Naive thymus-derived CD4-positive, alpha-beta T cell (primary cell): ENCODE measurements at regions of chr12 and their contacts with region 1.

Region 1: DNA sequence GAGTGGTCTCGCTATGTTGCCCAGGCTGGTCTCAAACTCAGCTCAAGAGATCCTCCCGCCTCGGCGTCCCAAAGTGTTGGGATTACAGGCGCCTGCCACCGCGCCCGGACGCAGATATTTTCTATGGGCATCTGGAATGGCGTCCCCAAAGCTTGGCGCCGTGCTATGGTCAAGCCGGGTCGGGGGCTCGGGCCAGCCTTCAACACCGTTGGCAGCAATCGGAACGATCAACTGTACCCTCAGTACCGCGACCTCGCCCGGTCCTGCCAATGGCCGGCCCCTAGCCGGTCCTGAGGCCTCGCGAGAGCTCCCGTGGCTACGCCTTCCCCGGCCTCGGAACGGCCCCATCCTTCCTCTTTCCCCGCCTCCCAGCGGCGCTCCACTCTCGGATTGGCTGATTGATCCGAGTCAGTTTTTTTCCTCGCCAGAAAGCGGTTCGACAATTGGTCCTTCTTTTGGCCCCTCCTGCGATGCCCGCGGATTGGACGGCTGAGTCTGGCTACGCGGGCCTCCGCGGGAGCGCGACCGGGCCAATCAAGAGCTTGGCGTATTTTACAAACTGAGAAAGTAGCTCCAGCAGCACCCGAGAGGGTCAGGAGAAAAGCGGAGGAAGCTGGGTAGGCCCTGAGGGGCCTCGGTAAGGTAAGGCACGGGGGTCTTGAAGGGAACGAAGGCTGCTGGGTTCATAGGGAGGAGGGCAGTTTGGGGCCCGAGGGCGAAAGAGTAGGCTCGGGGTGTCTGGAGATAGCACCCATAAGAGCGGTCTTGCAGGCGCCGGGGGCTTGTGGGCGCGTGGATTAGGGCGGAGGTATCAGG is at the start of gene TROAP:
- DNase-seq: peak; percentile 89 to 98 (median 96)
- ATAC-seq: peak; percentile 97
- H3K4me3 ChIP-seq: peak within 1 kb of the TSS; percentile 75
- H3K4me3 Mint-ChIP-seq: peak within 1 kb of the TSS; percentile 86 to 98 (median 92)
- H3K27ac ChIP-seq: peak within 1 kb of the TSS; percentile 72
- H3K27ac Mint-ChIP-seq: peak within 1 kb of the TSS; percentile 29 to 95 (median 83)
- H3K4me1 ChIP-seq: peaks cover 5 to 14% of the 10 kb centered on the region in 2 donors
- H3K4me1 Mint-ChIP-seq: peaks cover 16 to 25% (median 19%) of the 10 kb centered on the region in 7 donors
- H3K27me3 ChIP-seq: no peaks in the 10 kb centered on the region
- H3K27me3 Mint-ChIP-seq: peaks cover 0 to 5% (median 0%) of the 10 kb centered on the region in 5 donors
- total RNA-seq, gene TROAP: 0.83 to 58.2 (median 1.3) TPM in 4 of 5 experiments, not detected in the other

Region 2: GRCh38 chr12:49264738-49265515 is 58.0 kb before region 1 on chr12 and contains the start of gene TUBA1C:
- CTCF ChIA-PET with region 1: no interaction called
- POLR2A ChIA-PET with region 1: no interaction called
- intact Hi-C with region 1: loop called (anchors 1 kb)
- DNase-seq: peak; percentile 67 to 98 (median 72)
- ATAC-seq: peak; percentile 93
- H3K4me3 ChIP-seq: peak within 1 kb of the TSS; percentile 91
- H3K4me3 Mint-ChIP-seq: peak within 1 kb of the TSS; percentile 88 to 99 (median 92)
- H3K27ac ChIP-seq: peak within 1 kb of the TSS; percentile 68
- H3K27ac Mint-ChIP-seq: peak within 1 kb of the TSS; percentile 65 to 99 (median 89)
- H3K4me1 ChIP-seq: peaks cover 16% of the 10 kb centered on the region in 2 donors
- H3K4me1 Mint-ChIP-seq: peaks cover 4 to 51% (median 11%) of the 10 kb centered on the region in 7 donors
- H3K27me3 ChIP-seq: no peaks in the 10 kb centered on the region
- H3K27me3 Mint-ChIP-seq: peaks cover 0 to 2% (median 0%) of the 10 kb centered on the region in 5 donors
- total RNA-seq, gene TUBA1C: 17.9 to 195 (median 24.1) TPM

Region 3: GRCh38 chr12:49336645-49337584 is 14.0 kb after region 1 on chr12 and contains the start of gene C1QL4:
- CTCF ChIA-PET with region 1: interaction called, 6 read pairs
- POLR2A ChIA-PET with region 1: interaction called, 5 read pairs
- intact Hi-C with region 1: loop called (anchors 1 kb)
- DNase-seq: peak; percentile 73 to 96 (median 85)
- ATAC-seq: peak; percentile 98
- H3K4me3 ChIP-seq: peak within 1 kb of the TSS; percentile 46
- H3K4me3 Mint-ChIP-seq: peak within 1 kb of the TSS; percentile 31 to 77 (median 72)
- H3K27ac ChIP-seq: no peak within 1 kb of the TSS
- H3K27ac Mint-ChIP-seq: peak within 1 kb of the TSS in 1 of 9 donors; percentile 32
- H3K4me1 ChIP-seq: peaks cover 8 to 9% of the 10 kb centered on the region in 2 donors
- H3K4me1 Mint-ChIP-seq: peaks cover 16 to 39% (median 31%) of the 10 kb centered on the region in 7 donors
- H3K27me3 ChIP-seq: peaks cover 0 to 21% of the 10 kb centered on the region in 2 donors
- H3K27me3 Mint-ChIP-seq: peaks cover 64 to 93% (median 75%) of the 10 kb centered on the region in 5 donors
- total RNA-seq, gene C1QL4: not detected

Region 4: DNA sequence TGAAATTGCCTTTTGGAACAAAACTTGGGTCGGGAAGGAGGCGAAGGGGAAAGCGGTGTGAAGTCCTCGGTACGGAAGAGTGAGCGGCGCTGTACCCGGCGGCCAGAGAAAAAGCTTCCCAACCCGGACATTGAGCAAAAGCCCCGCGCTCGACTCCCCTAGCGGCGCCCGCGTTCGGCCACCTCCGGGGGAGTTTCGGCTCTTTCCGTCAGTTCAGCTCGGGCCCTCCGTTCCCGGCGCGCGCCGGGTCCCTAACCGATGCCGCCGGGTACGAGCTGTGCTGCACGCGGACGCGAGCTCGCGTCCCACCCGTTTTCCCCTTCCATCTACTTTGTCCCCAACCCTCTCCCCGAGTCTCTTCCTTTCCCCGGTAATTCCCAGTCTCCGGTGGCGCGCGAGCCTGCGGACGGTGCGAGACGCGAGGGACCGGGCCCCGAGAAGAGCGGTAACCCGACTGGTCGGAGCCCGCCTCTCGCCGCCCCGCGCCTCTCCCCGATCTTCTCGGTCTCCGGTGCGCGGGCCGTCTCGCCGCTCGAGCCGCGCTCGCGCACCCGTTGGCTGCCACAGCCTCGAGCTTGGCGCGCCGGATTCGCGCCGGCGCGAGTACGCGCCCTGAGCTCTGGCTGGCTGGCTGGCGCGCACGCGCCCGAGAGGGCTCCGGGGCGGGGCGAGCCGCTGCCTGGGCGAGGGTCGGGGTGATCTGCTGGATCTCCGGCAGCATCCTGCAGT is 43.9 kb after region 1 on chr12:
- CTCF ChIA-PET with region 1: no interaction called
- POLR2A ChIA-PET with region 1: interaction called, 5 read pairs
- intact Hi-C with region 1: loop called (anchors 2 kb)
- DNase-seq: peak; percentile 72 to 95 (median 82)
- ATAC-seq: peak; percentile 90
- H3K4me3 ChIP-seq: peak overlapping the region; percentile 90
- H3K4me3 Mint-ChIP-seq: peak overlapping the region; percentile 71 to 97 (median 88)
- H3K27ac ChIP-seq: peak overlapping the region; percentile 87
- H3K27ac Mint-ChIP-seq: peak overlapping the region; percentile 65 to 97 (median 94)
- H3K4me1 ChIP-seq: peaks cover 0 to 15% of the 10 kb centered on the region in 2 donors
- H3K4me1 Mint-ChIP-seq: peaks cover 11 to 39% (median 31%) of the 10 kb centered on the region in 7 donors
- H3K27me3 ChIP-seq: no peaks in the 10 kb centered on the region
- H3K27me3 Mint-ChIP-seq: peaks cover 0 to 2% (median 0%) of the 10 kb centered on the region in 5 donors

Region 5: GRCh38 chr12:49388682-49389386 is 65.9 kb after region 1 on chr12:
- CTCF ChIA-PET with region 1: no interaction called
- POLR2A ChIA-PET with region 1: no interaction called
- intact Hi-C with region 1: no loop called
- DNase-seq: peak; percentile 29 to 66 (median 56)
- ATAC-seq: peak; percentile 96
- H3K4me3 ChIP-seq: no peak overlapping the region
- H3K4me3 Mint-ChIP-seq: peak overlapping the region in 9 of 10 donors; percentile 12 to 74 (median 63)
- H3K27ac ChIP-seq: no peak overlapping the region
- H3K27ac Mint-ChIP-seq: peak overlapping the region in 1 of 9 donors; percentile 36
- H3K4me1 ChIP-seq: no peaks in the 10 kb centered on the region
- H3K4me1 Mint-ChIP-seq: peaks cover 0 to 11% (median 4%) of the 10 kb centered on the region in 7 donors
- H3K27me3 ChIP-seq: no peaks in the 10 kb centered on the region
- H3K27me3 Mint-ChIP-seq: no peaks in the 10 kb centered on the region